Activated CD4-positive, alpha-beta memory T cell treated with anti-CD3 and anti-CD28 coated beads for 36 hours (primary cell): ENCODE measurements at regions of chr5 and their contacts with region 1.

Region 1: DNA sequence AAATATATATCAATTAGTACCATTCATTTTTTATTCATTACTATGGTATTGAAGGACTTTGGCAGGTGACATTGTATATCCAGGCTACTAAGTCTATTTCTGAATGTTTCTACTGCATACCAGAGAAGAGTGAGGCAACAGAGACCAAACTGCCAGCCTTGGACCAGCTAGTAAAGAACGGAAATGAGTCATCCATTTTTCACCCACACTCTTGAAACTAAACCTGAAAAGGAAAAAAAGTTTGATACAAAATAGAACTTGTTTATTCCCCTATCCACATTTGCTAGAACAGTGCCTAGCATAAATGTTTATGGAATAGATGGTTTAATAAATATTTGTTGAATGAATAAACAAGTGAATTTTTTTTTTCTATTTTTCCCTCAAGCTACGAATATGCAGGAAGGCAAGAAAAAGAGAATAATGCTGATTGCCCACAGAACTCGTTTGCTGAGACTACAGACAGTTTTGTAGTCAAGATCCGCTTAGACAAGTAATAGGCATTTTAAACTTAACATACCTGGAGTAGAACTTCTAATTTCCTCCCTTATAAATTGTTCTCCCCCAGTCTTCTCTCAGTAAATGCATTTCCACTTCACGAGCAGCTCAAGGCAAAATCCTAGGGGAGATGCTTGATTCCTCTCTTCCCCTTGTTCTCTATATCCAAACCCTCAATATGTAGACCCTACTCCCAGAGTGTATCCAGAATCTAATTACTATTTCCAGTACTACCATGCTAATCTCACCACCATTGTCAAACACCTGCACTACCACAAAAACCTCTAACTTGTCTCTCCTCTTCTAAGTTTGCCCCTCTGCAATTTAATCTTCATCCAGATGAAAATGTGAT is 146.2 kb upstream of the RASA1 start:
- DNase-seq: peak; percentile 56
- H3K4me3 Mint-ChIP-seq: peak overlapping the region; percentile 11
- H3K27ac Mint-ChIP-seq: peak overlapping the region; percentile 79
- H3K4me1 Mint-ChIP-seq: peaks cover 55% of the 10 kb centered on the region
- H3K27me3 Mint-ChIP-seq: no peaks in the 10 kb centered on the region

Region 2: DNA sequence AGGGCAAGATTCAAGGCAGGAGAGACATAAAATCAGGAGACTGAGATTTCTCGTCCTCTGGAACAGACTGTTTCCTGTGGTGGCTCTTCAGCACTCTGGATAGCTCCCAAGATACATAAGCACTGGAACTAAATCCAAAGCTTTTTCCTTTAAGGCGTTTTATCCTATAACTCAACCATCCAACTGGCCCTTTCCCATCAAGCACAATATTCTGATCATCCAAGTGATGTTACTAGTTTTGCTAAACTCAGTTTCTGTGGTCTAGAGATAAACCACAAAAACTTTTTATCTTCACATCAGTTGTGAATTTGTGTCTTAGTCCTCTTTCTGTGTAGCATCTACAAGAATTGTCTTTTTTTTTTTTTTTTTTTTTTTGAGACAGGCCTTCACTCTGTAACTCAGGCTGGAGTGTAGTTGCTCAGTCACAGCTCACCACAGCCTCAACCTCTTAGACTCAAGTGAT is 204.4 kb before region 1 on chr5:
- CTCF ChIA-PET with region 1: no interaction called
- POLR2A ChIA-PET with region 1: no interaction called
- intact Hi-C with region 1: loop called (anchors 1 kb)
- DNase-seq: peak; percentile 18
- H3K4me3 Mint-ChIP-seq: no peak overlapping the region
- H3K27ac Mint-ChIP-seq: no peak overlapping the region
- H3K4me1 Mint-ChIP-seq: peaks cover 13% of the 10 kb centered on the region
- H3K27me3 Mint-ChIP-seq: peaks cover 4% of the 10 kb centered on the region

Region 3: GRCh38 chr5:86968301-86968753 is 153.2 kb before region 1 on chr5:
- CTCF ChIA-PET with region 1: no interaction called
- POLR2A ChIA-PET with region 1: no interaction called
- intact Hi-C with region 1: no loop called
- DNase-seq: no peak
- H3K4me3 Mint-ChIP-seq: no peak overlapping the region
- H3K27ac Mint-ChIP-seq: no peak overlapping the region
- H3K4me1 Mint-ChIP-seq: peaks cover 8% of the 10 kb centered on the region
- H3K27me3 Mint-ChIP-seq: peaks cover 5% of the 10 kb centered on the region

Region 4: GRCh38 chr5:87081511-87082372 is 39.8 kb before region 1 on chr5:
- CTCF ChIA-PET with region 1: no interaction called
- POLR2A ChIA-PET with region 1: no interaction called
- intact Hi-C with region 1: loop called (anchors 2 kb)
- DNase-seq: peak; percentile 47
- H3K4me3 Mint-ChIP-seq: peak overlapping the region; percentile 46
- H3K27ac Mint-ChIP-seq: peak overlapping the region; percentile 78
- H3K4me1 Mint-ChIP-seq: peaks cover 32% of the 10 kb centered on the region
- H3K27me3 Mint-ChIP-seq: no peaks in the 10 kb centered on the region

Region 5: DNA sequence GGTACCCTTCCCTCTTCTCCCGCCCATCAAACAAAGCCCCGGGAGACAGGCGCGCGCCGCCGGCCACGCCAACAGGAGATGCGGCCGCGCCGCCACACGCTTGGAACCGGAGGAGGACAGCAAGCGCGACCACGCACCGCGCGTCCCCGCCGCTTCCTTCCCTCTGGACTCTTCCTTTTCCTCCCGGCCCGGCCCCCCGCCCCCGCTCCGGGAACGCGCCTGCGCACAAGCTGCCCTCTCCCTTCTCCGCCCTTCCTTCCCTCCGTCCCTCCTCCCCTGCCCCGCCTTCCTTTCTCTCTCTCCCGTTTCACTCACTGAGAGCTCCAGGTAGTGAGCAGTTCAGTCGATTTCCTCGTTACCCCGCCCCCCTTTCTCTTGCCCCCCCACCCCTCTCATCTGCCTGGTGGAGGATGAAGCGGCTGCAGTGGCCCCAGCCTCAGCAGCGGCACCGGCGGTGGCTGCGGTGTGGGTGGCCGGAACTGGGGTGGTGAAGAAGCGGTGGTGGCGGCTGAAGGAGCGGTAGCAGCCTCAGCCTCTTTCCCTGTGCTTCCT is 146.1 kb after region 1 on chr5 and contains the start of gene RASA1:
- CTCF ChIA-PET with region 1: interaction called, 3 read pairs
- POLR2A ChIA-PET with region 1: interaction called, 4 read pairs
- intact Hi-C with region 1: loop called (anchors 1 kb)
- DNase-seq: peak; percentile 92
- H3K4me3 Mint-ChIP-seq: peak within 1 kb of the TSS; percentile 99
- H3K27ac Mint-ChIP-seq: peak within 1 kb of the TSS; percentile 99
- H3K4me1 Mint-ChIP-seq: peaks cover 34% of the 10 kb centered on the region
- H3K27me3 Mint-ChIP-seq: no peaks in the 10 kb centered on the region
- total RNA-seq, gene RASA1: 25.1 to 25.4 TPM

Region 6: GRCh38 chr5:87300744-87301143 is 179.2 kb after region 1 on chr5:
- CTCF ChIA-PET with region 1: interaction called, 4 read pairs
- POLR2A ChIA-PET with region 1: no interaction called
- intact Hi-C with region 1: loop called (anchors 5 kb)
- DNase-seq: peak; percentile 70
- H3K4me3 Mint-ChIP-seq: no peak overlapping the region
- H3K27ac Mint-ChIP-seq: no peak overlapping the region
- H3K4me1 Mint-ChIP-seq: peaks cover 65% of the 10 kb centered on the region
- H3K27me3 Mint-ChIP-seq: no peaks in the 10 kb centered on the region

Region 7: DNA sequence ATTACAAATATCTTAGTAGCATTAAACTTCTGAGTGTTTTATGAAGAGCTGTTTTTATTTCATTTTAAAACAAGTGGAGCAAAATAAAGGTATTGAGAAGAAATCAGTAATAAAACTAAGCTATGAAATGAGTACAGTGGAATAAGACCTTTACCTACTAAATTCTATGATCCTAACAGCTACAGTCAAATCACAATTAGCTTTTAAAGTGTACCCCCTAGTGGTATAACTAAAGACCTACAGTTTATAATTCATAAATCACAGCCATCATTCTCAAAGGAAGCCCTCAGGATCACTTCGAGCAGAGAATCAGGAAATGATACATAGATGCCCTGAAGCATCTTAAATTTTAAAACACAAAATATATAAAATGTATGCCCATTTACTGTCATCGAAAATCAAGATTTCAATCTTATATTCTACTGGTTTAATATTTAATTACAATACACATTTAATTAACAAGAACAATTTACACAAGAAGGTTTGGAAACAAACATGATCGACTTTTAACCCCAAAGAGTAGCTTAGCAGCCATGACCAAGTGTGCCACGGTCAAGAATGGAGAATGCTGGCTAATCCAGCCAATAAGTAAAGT is 278.9 kb after region 1 on chr5:
- CTCF ChIA-PET with region 1: interaction called, 7 read pairs
- POLR2A ChIA-PET with region 1: no interaction called
- intact Hi-C with region 1: loop called (anchors 2 kb)
- DNase-seq: no peak
- H3K4me3 Mint-ChIP-seq: no peak overlapping the region
- H3K27ac Mint-ChIP-seq: no peak overlapping the region
- H3K4me1 Mint-ChIP-seq: peaks cover 31% of the 10 kb centered on the region
- H3K27me3 Mint-ChIP-seq: no peaks in the 10 kb centered on the region